Common myeloid progenitor, CD34-positive (primary cell): ENCODE measurements at regions of chr7 and their contacts with region 1.

Region 1: GRCh38 chr7:150876817-150877526 is 24.7 kb downstream of the AOC1 start:
- DNase-seq: peak; percentile 87 to 91 (median 91)
- H3K4me3 ChIP-seq: peak overlapping the region in 2 of 7 experiments; percentile 35 to 54
- H3K27ac ChIP-seq: no peak overlapping the region
- H3K4me1 ChIP-seq: peaks cover 0 to 8% (median 4%) of the 10 kb centered on the region in 4 experiments
- H3K27me3 ChIP-seq: peaks cover 0 to 9% (median 0%) of the 10 kb centered on the region in 5 experiments

Region 2: DNA sequence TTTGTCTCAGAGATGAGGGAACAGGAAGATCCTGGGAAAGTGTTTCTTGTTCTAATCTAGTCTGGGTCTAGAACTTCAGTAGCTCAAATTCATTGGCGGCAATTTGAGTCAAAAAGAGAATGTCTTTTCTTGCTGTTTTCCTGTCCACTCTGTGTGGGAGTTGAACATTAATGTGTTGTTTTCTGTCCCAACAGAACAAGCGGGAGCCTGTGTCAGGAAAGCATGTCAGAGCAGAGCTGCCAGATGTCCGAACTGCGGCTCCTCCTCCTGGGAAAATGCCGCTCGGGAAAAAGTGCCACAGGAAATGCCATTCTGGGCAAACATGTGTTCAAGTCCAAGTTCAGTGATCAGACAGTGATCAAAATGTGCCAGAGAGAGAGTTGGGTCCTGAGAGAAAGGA is 410.5 kb before region 1 on chr7:
- CTCF ChIA-PET with region 1: no interaction called
- POLR2A ChIA-PET with region 1: no interaction called
- DNase-seq: no peak
- H3K4me3 ChIP-seq: no peak overlapping the region
- H3K27ac ChIP-seq: no peak overlapping the region
- H3K4me1 ChIP-seq: no peaks in the 10 kb centered on the region
- H3K27me3 ChIP-seq: no peaks in the 10 kb centered on the region

Region 3: GRCh38 chr7:150778738-150779301 is 98.2 kb before region 1 on chr7:
- CTCF ChIA-PET with region 1: interaction called, 51 read pairs
- POLR2A ChIA-PET with region 1: no interaction called
- DNase-seq: peak; percentile 65 to 71 (median 66)
- H3K4me3 ChIP-seq: no peak overlapping the region
- H3K27ac ChIP-seq: no peak overlapping the region
- H3K4me1 ChIP-seq: peaks cover 0 to 12% (median 2%) of the 10 kb centered on the region in 4 experiments
- H3K27me3 ChIP-seq: peaks cover 0 to 2% (median 0%) of the 10 kb centered on the region in 5 experiments

Region 4: GRCh38 chr7:150787321-150788281 is 89.4 kb before region 1 on chr7:
- CTCF ChIA-PET with region 1: interaction called, 51 read pairs
- POLR2A ChIA-PET with region 1: no interaction called
- DNase-seq: peak; percentile 71 to 91 (median 90)
- H3K4me3 ChIP-seq: peak overlapping the region in 5 of 7 experiments; percentile 13 to 40 (median 25)
- H3K27ac ChIP-seq: peak overlapping the region; percentile 25 to 45
- H3K4me1 ChIP-seq: peaks cover 14 to 65% (median 58%) of the 10 kb centered on the region in 4 experiments
- H3K27me3 ChIP-seq: no peaks in the 10 kb centered on the region

Region 5: DNA sequence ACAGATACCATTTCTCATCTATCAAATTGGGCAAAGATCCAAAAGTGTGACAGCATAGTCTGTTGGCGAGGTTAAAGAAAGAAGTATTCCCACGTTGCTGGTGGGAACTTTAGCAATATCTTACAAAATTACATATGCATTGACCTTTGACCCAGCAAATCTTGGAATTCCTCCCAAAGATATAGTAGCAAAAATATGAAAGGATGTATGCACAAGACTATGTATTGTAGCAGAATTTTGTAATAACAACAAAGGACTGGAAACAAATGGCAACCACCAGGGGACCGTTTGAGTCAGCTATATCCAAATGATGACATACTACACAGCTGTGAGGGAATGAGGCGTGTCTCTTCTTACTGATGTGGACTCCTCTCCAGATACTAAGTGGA is 51.0 kb after region 1 on chr7:
- CTCF ChIA-PET with region 1: no interaction called
- POLR2A ChIA-PET with region 1: no interaction called
- DNase-seq: peak in 2 of 3 donors; percentile 39 to 49
- H3K4me3 ChIP-seq: no peak overlapping the region
- H3K27ac ChIP-seq: no peak overlapping the region
- H3K4me1 ChIP-seq: peaks cover 0 to 28% (median 21%) of the 10 kb centered on the region in 4 experiments
- H3K27me3 ChIP-seq: no peaks in the 10 kb centered on the region

Region 6: DNA sequence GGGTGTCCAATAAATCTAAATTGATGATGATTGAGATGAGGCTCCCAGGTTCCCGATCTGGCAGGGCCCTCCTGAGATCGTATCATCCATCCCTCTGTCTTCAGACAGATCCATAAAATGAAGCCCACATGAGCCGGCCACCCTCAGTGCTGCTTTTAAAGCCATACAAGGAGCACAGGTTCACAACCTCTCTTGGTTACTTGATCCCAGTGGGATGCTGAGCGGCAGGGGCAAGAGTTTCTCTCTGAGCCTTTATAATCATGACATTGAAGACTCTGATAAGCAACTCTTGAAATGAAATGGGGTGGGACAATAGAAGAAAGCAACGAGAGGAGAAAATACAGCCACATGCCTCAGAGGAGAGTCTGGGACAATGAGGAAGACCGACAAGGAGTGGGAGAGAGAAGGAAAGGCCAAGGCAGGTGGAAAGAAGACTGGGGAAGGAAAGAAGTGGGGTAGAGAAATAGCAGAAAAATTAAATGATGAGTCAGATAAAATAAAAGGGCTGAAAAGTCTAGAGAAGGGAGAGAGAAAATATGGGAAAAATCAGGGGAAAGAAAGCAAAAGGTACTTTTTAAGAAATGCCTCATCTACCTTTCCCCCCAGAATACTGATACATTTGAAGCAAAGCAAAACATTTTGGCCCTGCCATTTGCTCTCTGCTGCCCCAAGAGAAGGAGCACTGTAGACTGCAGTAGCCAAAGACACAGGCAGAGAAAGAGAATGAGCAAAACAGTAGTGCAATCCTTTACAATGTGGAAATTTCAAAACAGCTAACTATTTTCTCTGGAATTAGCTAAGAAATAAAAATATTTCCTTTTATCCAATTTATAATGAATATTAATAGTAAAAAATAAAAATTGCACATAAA is 275.9 kb after region 1 on chr7:
- CTCF ChIA-PET with region 1: no interaction called
- POLR2A ChIA-PET with region 1: no interaction called
- DNase-seq: peak in 1 of 3 donors; percentile 14
- H3K4me3 ChIP-seq: no peak overlapping the region
- H3K27ac ChIP-seq: no peak overlapping the region
- H3K4me1 ChIP-seq: no peaks in the 10 kb centered on the region
- H3K27me3 ChIP-seq: peaks cover 0 to 44% (median 35%) of the 10 kb centered on the region in 5 experiments